OCI-LY7 (cell line): ENCODE measurements at regions of chr4 and their contacts with region 1.

Region 1: DNA sequence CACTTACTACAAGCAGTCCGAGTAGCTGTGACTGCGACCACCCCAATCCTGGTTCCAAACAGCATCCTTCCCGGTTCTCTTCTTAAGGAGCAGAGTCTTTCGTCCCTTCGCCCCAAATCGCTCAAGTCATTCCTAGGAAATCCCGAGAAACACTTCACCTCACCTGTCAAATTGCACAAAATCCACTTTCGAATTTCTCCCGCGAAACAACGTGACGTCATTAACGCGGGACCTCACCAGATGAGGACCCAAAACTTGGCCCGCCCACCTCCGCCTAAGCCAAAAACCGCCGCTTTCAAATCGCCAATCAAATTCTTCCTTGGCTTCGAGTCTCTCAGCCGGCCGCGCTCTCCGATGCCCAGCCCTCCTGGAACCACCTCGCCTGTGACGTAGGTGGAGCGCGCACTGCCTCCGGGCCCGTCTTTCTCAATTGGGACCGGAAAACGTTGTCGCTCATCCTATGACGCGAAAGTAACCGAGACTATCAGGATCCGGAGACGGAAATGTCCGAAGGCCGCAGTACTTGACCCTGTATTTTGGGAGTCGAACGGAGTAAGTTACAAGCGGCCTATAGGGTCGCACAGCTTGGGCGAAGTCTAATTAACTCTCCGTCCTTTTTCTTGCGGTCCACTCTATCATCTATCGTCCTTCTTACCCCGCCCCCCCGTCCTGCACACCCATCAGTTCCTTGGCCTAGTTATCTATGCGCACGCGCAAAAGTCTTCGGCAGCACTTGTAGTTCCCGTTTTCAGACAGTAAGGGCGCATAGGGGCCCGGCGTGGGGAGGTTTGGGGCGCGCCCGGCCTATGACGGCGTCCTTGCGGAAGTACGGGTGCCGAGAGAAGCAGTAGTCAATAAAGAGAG is at the starts of genes LARP7 and ZGRF1:
- DNase-seq: peak; percentile 99
- H3K4me3 ChIP-seq: peak within 1 kb of the TSS; percentile 88
- H3K27ac ChIP-seq: peak within 1 kb of the TSS; percentile 79
- H3K4me1 ChIP-seq: peaks cover 33% of the 10 kb centered on the region
- CTCF ChIP-seq: peak; percentile 92
- total RNA-seq, gene LARP7: 35.0 and 61.3 TPM in 2 replicates
- total RNA-seq, gene ZGRF1: 54.4 and 63.5 TPM in 2 replicates

Region 2: DNA sequence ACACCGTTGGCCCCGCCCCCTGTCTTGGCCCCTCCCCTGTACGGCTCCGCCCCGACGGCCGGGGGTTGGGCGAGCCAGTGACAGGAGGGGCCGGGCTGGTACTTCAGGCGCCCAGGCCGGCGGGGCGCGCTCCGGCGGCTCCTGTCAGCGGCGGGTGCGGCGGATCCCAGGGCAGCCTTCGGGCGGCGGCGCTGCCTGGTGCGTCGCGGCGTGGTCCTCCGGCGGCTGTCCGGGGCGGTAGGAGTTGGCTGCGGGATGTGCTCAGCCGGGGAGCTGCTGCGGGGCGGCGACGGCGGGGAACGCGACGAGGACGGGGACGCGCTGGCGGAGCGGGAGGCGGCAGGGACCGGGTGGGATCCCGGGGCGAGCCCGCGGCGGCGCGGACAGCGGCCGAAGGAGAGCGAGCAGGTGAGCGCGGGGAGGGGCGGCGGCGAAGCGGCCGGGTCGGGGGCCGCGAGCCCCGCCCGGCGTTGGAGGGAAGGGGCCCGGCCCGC is 491.5 kb before region 1 on chr4 and contains the start of gene FAM241A:
- CTCF ChIA-PET with region 1: no interaction called
- POLR2A ChIA-PET with region 1: interaction called, 4 read pairs
- intact Hi-C with region 1: loop called (anchors 2 kb)
- DNase-seq: peak; percentile 92
- H3K4me3 ChIP-seq: peak within 1 kb of the TSS; percentile 75
- H3K27ac ChIP-seq: peak within 1 kb of the TSS; percentile 44
- H3K4me1 ChIP-seq: peaks cover 40% of the 10 kb centered on the region
- CTCF ChIP-seq: no peak
- total RNA-seq, gene FAM241A: 2.1 and 2.5 TPM in 2 replicates

Region 3: DNA sequence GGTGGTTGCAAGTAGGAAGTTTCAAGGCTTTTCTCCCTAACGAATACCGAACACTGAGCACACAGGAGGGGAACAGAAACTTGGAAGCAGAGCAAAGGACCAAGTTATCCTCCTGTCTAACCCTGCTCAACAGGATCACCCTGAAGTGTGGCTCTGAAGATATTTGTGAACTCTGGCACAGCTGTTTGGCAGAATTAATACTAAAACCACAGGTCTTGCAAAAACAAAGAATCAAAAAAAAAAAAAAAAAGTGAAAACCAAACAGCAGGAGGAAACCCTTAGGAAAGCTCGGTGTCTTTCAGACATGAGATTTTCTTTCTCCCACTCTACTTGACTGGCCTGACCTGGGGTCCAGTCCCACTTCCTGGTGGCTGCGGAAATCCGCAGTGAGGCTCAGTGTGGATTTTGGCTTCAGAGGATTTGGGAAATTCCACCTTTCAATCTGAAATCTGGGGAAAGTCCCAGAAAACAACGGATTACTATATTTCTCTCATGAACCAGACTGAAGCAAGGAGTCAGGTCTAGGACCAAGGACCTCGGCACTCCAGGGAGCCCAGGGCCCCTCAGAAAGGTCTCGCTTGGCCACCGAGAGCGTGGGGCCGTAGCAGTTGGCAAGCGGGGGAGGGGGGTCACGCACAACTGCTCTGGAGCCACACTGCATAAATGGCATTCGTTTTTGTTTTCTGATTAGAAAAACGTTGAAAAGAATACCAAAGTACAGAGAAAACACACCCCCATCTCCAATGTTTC is 352.1 kb before region 1 on chr4:
- CTCF ChIA-PET with region 1: no interaction called
- POLR2A ChIA-PET with region 1: interaction called, 5 read pairs
- intact Hi-C with region 1: loop called (anchors 1 kb)
- DNase-seq: peak; percentile 52
- H3K4me3 ChIP-seq: peak overlapping the region; percentile 96
- H3K27ac ChIP-seq: peak overlapping the region; percentile 94
- H3K4me1 ChIP-seq: peaks cover 77% of the 10 kb centered on the region
- CTCF ChIP-seq: no peak; the same call in 1 of the 2 replicates

Region 4: DNA sequence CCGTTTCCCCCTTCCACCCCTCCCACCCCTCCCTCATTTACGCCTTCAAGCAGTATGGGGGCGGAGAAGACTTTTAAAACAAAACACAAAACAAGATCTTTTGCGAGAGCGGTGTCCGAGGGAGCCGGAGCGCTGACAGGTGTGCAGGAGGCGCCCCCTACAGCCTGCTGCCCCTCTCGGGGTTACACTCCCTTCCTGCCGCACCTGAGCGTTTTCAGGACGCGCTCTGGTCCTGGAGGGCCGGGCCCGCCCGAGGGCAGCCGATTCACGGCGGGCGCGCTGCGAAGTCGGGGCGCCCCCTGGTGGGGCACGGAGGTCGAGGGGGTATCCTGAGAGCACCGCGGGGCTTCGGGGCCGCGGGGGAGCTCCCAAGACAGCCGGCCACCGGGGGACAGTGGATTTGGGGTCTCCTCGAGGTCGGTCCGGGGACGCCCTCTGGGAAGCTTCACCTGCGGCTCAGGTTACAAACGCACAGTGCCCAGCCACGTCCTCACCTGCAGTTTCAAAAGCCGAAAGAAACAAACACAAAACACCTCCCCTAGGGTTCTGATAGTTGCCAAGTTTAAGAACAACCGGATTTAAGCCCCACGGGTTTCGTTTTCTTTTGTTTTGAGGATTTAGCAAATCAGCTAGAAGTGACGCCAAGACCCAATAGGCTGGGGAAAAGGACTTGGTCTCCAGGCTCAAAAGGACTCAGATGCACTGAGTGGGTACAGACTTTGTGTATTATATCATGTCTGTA is 113.0 kb before region 1 on chr4:
- CTCF ChIA-PET with region 1: no interaction called
- POLR2A ChIA-PET with region 1: no interaction called
- intact Hi-C with region 1: no loop called
- DNase-seq: peak; percentile 93
- H3K4me3 ChIP-seq: peak overlapping the region; percentile 69
- H3K27ac ChIP-seq: no peak overlapping the region
- H3K4me1 ChIP-seq: peaks cover 20% of the 10 kb centered on the region
- CTCF ChIP-seq: peak; percentile 99

Region 5: GRCh38 chr4:112677519-112678091 is 40.7 kb after region 1 on chr4:
- CTCF ChIA-PET with region 1: no interaction called
- POLR2A ChIA-PET with region 1: no interaction called
- intact Hi-C with region 1: no loop called
- DNase-seq: no peak
- H3K4me3 ChIP-seq: no peak overlapping the region
- H3K27ac ChIP-seq: no peak overlapping the region
- H3K4me1 ChIP-seq: no peaks in the 10 kb centered on the region
- CTCF ChIP-seq: no peak

Region 6: GRCh38 chr4:112702892-112703291 is 66.0 kb after region 1 on chr4:
- CTCF ChIA-PET with region 1: no interaction called
- POLR2A ChIA-PET with region 1: no interaction called
- intact Hi-C with region 1: loop called (anchors 5 kb)
- DNase-seq: no peak
- H3K4me3 ChIP-seq: no peak overlapping the region
- H3K27ac ChIP-seq: no peak overlapping the region
- H3K4me1 ChIP-seq: peaks cover 13% of the 10 kb centered on the region
- CTCF ChIP-seq: no peak

Region 7: GRCh38 chr4:112938461-112939058 is 301.6 kb after region 1 on chr4:
- CTCF ChIA-PET with region 1: no interaction called
- POLR2A ChIA-PET with region 1: no interaction called
- intact Hi-C with region 1: loop called (anchors 5 kb)
- DNase-seq: peak; percentile 33
- H3K4me3 ChIP-seq: no peak overlapping the region
- H3K27ac ChIP-seq: no peak overlapping the region
- H3K4me1 ChIP-seq: no peaks in the 10 kb centered on the region
- CTCF ChIP-seq: peak; percentile 94

Region 8: GRCh38 chr4:113064244-113064643 is 427.3 kb after region 1 on chr4:
- CTCF ChIA-PET with region 1: no interaction called
- POLR2A ChIA-PET with region 1: no interaction called
- intact Hi-C with region 1: no loop called
- DNase-seq: no peak
- H3K4me3 ChIP-seq: no peak overlapping the region
- H3K27ac ChIP-seq: no peak overlapping the region
- H3K4me1 ChIP-seq: no peaks in the 10 kb centered on the region
- CTCF ChIP-seq: no peak

Region 9: GRCh38 chr4:113761620-113762185 is 1124.8 kb after region 1 on chr4 and contains the start of gene CAMK2D:
- CTCF ChIA-PET with region 1: no interaction called
- POLR2A ChIA-PET with region 1: no interaction called
- intact Hi-C with region 1: loop called (anchors 10 kb)
- DNase-seq: peak; percentile 91
- H3K4me3 ChIP-seq: peak within 1 kb of the TSS; percentile 89
- H3K27ac ChIP-seq: peak within 1 kb of the TSS; percentile 99
- H3K4me1 ChIP-seq: peaks cover 27% of the 10 kb centered on the region
- CTCF ChIP-seq: peak; percentile 76
- total RNA-seq, gene CAMK2D: 109 and 120 TPM in 2 replicates

Region 10: GRCh38 chr4:114603497-114603896 is 1966.6 kb after region 1 on chr4:
- CTCF ChIA-PET with region 1: no interaction called
- POLR2A ChIA-PET with region 1: no interaction called
- intact Hi-C with region 1: loop called (anchors 10 kb)
- DNase-seq: peak; percentile 85
- H3K4me3 ChIP-seq: peak overlapping the region; percentile 93
- H3K27ac ChIP-seq: peak overlapping the region; percentile 80
- H3K4me1 ChIP-seq: peaks cover 58% of the 10 kb centered on the region
- CTCF ChIP-seq: no peak